Left lung (tissue), 14 donors: ENCODE measurements at regions of chr3 and their contacts with region 1.

Region 1: GRCh38 chr3:142993958-142994442 is 7.4 kb upstream of the U2SURP start:
- DNase-seq: peak in 2 of 4 donors; percentile 51 to 68
- ATAC-seq: peak; percentile 65
- H3K4me3 ChIP-seq: no peak overlapping the region
- H3K27ac ChIP-seq: no peak overlapping the region
- H3K4me1 ChIP-seq: peaks cover 0 to 13% of the 10 kb centered on the region in 2 donors
- H3K27me3 ChIP-seq: no peaks in the 10 kb centered on the region
- CTCF ChIP-seq: peak; percentile 48 to 70

Region 2: DNA sequence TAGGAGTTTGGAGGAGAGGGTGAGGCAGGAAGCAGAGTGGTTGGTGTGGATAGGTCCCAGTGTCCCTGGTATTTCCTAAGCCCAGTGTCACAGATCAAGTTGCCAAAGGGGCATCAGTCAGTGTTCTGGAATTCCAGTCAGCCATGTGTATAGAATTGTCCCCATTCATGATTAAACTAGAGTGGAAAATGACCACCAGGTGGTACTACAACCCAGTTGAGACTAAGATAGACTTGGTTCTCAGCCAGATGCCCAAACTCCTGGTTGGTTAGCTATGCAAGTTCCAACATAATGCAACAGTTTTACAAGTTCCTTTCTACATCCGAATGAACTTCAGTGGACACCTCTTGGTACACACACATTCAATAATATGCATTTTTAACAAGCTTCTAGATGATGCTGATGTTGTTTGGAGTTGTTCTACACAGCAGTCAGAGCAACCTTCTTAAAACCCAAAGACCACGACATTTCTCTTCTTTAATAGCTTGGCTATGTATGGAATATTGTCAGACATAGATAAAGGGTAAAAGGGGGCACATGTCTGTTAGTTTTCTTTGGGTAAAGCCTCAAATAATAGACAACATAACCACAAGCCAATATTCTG is 407.1 kb before region 1 on chr3:
- intact Hi-C with region 1: loop called in 1 of 2 experiments (anchors 10 kb)
- DNase-seq: peak in 2 of 4 donors; percentile 51 to 74
- ATAC-seq: peak; percentile 95
- H3K4me3 ChIP-seq: no peak overlapping the region
- H3K27ac ChIP-seq: no peak overlapping the region
- H3K4me1 ChIP-seq: no peaks in the 10 kb centered on the region
- H3K27me3 ChIP-seq: no peaks in the 10 kb centered on the region
- CTCF ChIP-seq: peak; percentile 40 to 47

Region 3: GRCh38 chr3:142817897-142818296 is 176.1 kb before region 1 on chr3:
- intact Hi-C with region 1: no loop called
- DNase-seq: no peak
- ATAC-seq: no peak
- H3K4me3 ChIP-seq: no peak overlapping the region
- H3K27ac ChIP-seq: no peak overlapping the region
- H3K4me1 ChIP-seq: no peaks in the 10 kb centered on the region
- H3K27me3 ChIP-seq: no peaks in the 10 kb centered on the region
- CTCF ChIP-seq: no peak

Region 4: DNA sequence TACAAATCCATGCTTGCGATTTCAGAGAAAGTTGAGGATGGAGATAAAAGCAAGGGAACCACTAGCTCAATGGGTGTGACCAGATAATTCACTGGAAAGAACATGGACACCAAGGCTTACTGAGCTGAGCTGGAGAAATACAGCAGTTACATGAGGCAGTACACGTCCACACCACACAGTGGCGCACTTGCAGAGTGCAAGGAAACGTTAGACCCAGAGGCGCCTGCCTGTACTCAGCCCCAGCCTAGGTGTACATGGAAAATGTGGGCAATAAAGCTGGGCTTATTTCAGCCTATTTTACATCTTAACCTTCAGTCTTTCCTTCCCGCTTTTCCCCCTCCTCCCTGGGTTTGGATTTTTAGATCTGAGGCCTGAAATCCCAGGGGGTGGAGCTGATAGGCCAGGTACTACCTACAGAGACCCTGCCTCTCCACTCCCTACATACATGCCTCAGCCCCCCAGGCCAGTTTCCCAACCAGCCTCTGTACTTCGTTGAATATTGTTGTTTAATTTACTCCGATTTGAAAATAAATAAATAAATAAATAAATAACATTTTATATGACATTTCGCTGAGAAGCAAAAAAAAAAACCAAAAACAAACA is 165.2 kb before region 1 on chr3:
- intact Hi-C with region 1: loop called in 1 of 2 experiments (anchors 5 kb)
- DNase-seq: peak; percentile 65 to 87 (median 79)
- ATAC-seq: peak; percentile 100
- H3K4me3 ChIP-seq: no peak overlapping the region
- H3K27ac ChIP-seq: no peak overlapping the region
- H3K4me1 ChIP-seq: no peaks in the 10 kb centered on the region
- H3K27me3 ChIP-seq: no peaks in the 10 kb centered on the region
- CTCF ChIP-seq: peak; percentile 74 to 84

Region 5: GRCh38 chr3:143090486-143090885 is 96.5 kb after region 1 on chr3:
- intact Hi-C with region 1: no loop called
- DNase-seq: peak in 1 of 4 donors; percentile 43
- ATAC-seq: peak; percentile 86
- H3K4me3 ChIP-seq: no peak overlapping the region
- H3K27ac ChIP-seq: no peak overlapping the region
- H3K4me1 ChIP-seq: no peaks in the 10 kb centered on the region
- H3K27me3 ChIP-seq: no peaks in the 10 kb centered on the region
- CTCF ChIP-seq: no peak

Region 6: DNA sequence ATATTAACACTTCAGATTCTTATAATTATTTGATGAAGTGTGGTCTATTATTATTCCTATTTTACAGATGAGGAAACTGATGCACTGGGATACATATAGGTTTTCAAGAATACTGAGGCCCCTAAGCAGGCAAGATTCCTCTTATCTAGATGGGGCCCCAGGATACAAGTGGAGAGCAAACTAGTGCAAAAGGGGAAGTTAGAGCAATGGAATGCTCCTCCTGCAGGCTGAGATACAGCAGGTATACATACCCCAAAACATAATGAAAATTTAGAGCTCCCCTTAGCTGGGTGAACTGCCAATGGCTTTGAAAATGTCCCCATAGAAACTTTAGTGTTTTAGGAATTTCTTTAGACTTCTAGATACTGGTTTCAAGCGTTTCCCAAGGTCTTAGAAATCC is 372.7 kb after region 1 on chr3:
- intact Hi-C with region 1: no loop called
- DNase-seq: no peak
- ATAC-seq: no peak
- H3K4me3 ChIP-seq: no peak overlapping the region
- H3K27ac ChIP-seq: no peak overlapping the region
- H3K4me1 ChIP-seq: peaks cover 0 to 4% of the 10 kb centered on the region in 2 donors
- H3K27me3 ChIP-seq: no peaks in the 10 kb centered on the region
- CTCF ChIP-seq: no peak